ENCODE measurements at regions of chr19 and their contacts with region 1.

Region 1: DNA sequence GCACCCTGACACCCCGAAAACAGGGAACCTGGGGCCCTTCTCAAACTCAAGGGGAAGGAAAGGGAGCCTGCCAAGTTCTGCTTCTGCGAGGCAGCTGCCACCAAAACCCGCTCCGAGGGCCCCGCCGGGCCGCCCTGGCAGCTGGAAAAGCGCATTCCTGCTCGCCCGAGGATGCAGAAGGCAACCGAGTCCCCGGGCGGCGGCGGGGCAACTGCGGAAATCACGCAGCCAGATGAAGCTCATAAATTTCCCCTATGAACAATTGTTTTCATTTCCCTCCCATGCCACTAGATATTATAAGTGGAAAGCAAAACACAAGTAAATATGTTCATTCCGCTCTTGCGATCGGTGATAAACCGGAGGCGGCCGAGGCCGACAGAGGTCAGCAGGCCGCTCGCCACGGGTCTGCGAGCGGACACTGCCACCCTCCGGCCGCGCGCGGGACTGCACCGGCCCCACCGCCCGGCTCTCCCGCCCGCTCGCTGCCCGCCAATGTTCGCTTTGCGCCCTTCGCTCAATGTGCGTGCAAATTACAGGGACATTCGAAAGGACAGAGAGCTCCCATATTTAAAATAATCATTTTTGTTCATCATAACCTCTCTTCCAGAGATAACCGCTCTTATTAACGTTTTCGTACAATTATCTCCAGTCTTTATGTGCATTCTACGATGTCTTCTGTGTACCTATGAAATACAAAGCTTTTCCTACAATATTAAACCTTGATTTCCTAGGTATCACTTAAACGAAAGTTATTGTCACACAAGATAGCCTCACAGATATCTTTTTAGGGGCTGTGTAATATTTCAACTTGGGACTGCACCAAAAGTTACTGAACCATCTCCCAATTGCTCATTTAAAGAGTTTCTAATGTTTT is 120.8 kb upstream of the ZNF507 start:
- DNase-seq: peak; percentile 24 to 54 (median 37)
- H3K4me3 ChIP-seq: no peak overlapping the region
- H3K4me3 Mint-ChIP-seq: peak overlapping the region in 6 of 7 donors; percentile 69 to 83 (median 76)
- H3K27ac ChIP-seq: no peak overlapping the region
- H3K27ac Mint-ChIP-seq: peak overlapping the region in 1 of 8 donors; percentile 65
- H3K4me1 ChIP-seq: peaks cover 14% of the 10 kb centered on the region
- H3K4me1 Mint-ChIP-seq: peaks cover 6 to 14% (median 12%) of the 10 kb centered on the region in 3 donors
- H3K27me3 ChIP-seq: peaks cover 25% of the 10 kb centered on the region
- H3K27me3 Mint-ChIP-seq: peaks cover 15 to 58% of the 10 kb centered on the region in 2 donors

Region 2: DNA sequence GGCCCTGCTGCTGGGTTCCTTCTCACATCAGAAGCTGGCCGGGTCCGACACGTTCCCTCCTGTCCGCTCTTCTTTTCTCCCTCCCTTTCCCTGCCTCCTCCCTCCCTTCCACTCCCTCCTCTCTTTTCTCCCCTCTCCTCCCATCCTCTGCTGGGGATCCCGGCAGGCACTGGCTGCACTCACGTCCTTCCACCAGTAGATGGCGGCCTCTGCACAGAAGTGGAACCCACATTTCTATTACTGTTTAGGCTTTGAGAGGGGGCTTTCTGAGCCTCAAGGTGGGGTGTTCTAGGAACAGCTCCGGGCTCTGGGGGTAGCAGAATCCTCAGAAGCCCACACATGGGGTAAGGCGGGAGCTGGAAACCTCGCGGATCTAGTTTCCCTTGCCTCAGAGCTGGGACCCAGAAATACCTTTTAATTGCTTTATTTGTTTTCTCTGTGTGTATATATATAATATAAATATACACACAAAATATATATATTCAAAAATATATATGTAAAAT is 1558.3 kb before region 1 on chr19:
- CTCF ChIA-PET with region 1: interaction called, 22 read pairs
- POLR2A ChIA-PET with region 1: no interaction called
- DNase-seq: peak in 3 of 5 donors; percentile 12 to 53 (median 26)
- H3K4me3 ChIP-seq: no peak overlapping the region
- H3K4me3 Mint-ChIP-seq: no peak overlapping the region
- H3K27ac ChIP-seq: no peak overlapping the region
- H3K27ac Mint-ChIP-seq: no peak overlapping the region
- H3K4me1 ChIP-seq: no peaks in the 10 kb centered on the region
- H3K4me1 Mint-ChIP-seq: no peaks in the 10 kb centered on the region
- H3K27me3 ChIP-seq: no peaks in the 10 kb centered on the region
- H3K27me3 Mint-ChIP-seq: peaks cover 16 to 35% of the 10 kb centered on the region in 2 donors

Region 3: GRCh38 chr19:30682999-30683536 is 1541.5 kb before region 1 on chr19:
- CTCF ChIA-PET with region 1: interaction called, 33 read pairs
- POLR2A ChIA-PET with region 1: no interaction called
- DNase-seq: peak in 4 of 5 donors; percentile 8 to 30 (median 14)
- H3K4me3 ChIP-seq: no peak overlapping the region
- H3K4me3 Mint-ChIP-seq: no peak overlapping the region
- H3K27ac ChIP-seq: no peak overlapping the region
- H3K27ac Mint-ChIP-seq: no peak overlapping the region
- H3K4me1 ChIP-seq: no peaks in the 10 kb centered on the region
- H3K4me1 Mint-ChIP-seq: no peaks in the 10 kb centered on the region
- H3K27me3 ChIP-seq: no peaks in the 10 kb centered on the region
- H3K27me3 Mint-ChIP-seq: peaks cover 3 to 41% of the 10 kb centered on the region in 2 donors

Region 4: GRCh38 chr19:32336259-32337083 is 111.9 kb after region 1 on chr19:
- CTCF ChIA-PET with region 1: no interaction called
- POLR2A ChIA-PET with region 1: no interaction called
- DNase-seq: no peak
- H3K4me3 ChIP-seq: no peak overlapping the region
- H3K4me3 Mint-ChIP-seq: no peak overlapping the region
- H3K27ac ChIP-seq: no peak overlapping the region
- H3K27ac Mint-ChIP-seq: peak overlapping the region in 3 of 8 donors; percentile 27 to 64 (median 47)
- H3K4me1 ChIP-seq: no peaks in the 10 kb centered on the region
- H3K4me1 Mint-ChIP-seq: no peaks in the 10 kb centered on the region
- H3K27me3 ChIP-seq: no peaks in the 10 kb centered on the region
- H3K27me3 Mint-ChIP-seq: peaks cover 0 to 8% of the 10 kb centered on the region in 2 donors

Measured in CD8-positive, alpha-beta memory T cell (primary cell).